Kidney (tissue), 22 donors: ENCODE measurements at regions of chr9 and their contacts with region 1.

Region 1: DNA sequence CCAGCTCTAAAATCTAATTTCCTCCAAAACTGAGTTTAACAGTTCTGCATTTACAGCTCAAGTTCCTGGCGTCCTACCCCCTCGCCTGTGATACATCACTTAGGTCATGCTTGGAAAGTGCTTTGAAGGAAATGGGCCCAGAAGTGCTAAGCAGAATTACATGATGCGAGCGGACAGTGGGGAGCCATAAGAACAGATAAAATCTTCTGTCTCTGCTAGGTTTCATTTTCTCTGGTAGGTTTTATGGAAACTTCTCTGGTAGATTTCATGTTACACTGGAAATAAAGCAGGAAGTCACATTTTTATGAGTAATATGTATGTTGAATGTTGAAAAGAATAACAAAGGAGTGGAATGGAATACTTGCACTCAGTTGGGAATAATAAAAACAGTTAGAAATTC is 138.3 kb downstream of the ZDHHC21 start:
- DNase-seq: no peak
- H3K4me3 ChIP-seq: no peak overlapping the region
- H3K27ac ChIP-seq: no peak overlapping the region
- H3K4me1 ChIP-seq: no peaks in the 10 kb centered on the region
- H3K27me3 ChIP-seq: no peaks in the 10 kb centered on the region
- CTCF ChIP-seq: no peak

Region 2: DNA sequence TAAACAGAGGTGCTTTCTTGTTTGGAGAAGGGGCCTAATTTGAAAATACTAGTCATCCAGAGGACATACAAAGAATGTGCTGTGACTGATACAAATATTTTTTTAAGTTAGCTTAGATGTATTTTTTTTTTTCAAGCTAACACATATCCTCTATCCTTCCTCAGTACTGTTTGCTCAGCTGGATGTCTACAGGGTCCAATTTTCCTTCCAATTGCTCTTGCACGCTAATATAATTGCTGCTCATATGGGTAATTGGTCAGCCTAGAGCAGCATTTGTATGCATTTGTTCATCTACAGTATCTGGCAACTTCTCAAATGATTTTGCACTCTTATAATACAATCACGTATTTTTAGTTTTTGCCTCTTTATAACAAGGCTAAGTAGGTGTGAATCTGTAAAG is 53.7 kb after region 1 on chr9:
- intact Hi-C with region 1: loop called (anchors 10 kb)
- DNase-seq: no peak
- H3K4me3 ChIP-seq: no peak overlapping the region
- H3K27ac ChIP-seq: no peak overlapping the region
- H3K4me1 ChIP-seq: no peaks in the 10 kb centered on the region
- H3K27me3 ChIP-seq: no peaks in the 10 kb centered on the region
- CTCF ChIP-seq: no peak